Mammary epithelial cell (primary cell): ENCODE measurements at regions of chr14 and their contacts with region 1.

Region 1: DNA sequence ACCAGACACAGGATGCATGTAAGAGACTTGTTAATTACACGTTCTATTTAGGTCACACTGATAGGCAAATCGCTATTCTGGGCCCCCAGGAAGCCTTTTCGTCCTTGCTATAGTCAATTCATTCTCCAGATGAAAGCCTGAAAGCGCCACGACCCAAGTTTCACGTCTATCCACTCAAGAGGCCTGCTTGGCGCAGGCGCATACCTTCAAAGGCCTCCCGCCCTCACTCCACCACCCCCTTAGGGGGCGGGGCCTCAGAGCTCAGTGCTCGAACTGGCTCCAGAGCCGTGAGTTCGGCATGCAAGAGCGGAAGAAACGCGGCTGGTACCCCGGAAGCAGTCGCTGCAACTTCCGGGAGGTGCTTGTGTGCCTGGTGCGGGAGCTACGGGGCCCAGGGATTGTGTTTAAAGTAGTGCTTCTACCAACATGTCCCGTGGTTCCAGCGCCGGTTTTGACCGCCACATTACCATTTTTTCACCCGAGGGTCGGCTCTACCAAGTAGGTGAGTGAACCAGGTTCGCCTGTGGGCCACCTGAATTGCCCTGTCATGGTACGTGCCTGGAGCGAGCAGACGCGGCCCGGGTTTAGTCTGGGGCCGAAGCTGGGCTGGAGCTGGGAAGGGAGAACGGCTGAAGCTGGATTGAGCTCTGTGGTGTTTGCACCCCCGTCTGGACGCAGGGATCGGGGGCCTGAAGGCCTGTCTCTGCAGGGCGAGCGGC is at the start of gene PSMA6:
- DNase-seq: peak; percentile 99
- H3K4me3 ChIP-seq: peak within 1 kb of the TSS; percentile 70 to 91 (median 86)
- H3K27ac ChIP-seq: peak within 1 kb of the TSS; percentile 84
- H3K4me1 ChIP-seq: peaks cover 14% of the 10 kb centered on the region
- H3K27me3 ChIP-seq: no peaks in the 10 kb centered on the region
- CTCF ChIP-seq: no peak
- total RNA-seq, gene PSMA6: 128 to 181 TPM

Region 2: GRCh38 chr14:34857689-34858449 is 434.3 kb before region 1 on chr14:
- CTCF ChIA-PET with region 1: no interaction called
- dilution Hi-C with region 1: no loop called
- in situ Hi-C with region 1: no loop called
- intact Hi-C with region 1: no loop called
- DNase-seq: no peak
- H3K4me3 ChIP-seq: no peak overlapping the region
- H3K27ac ChIP-seq: no peak overlapping the region
- H3K4me1 ChIP-seq: no peaks in the 10 kb centered on the region
- H3K27me3 ChIP-seq: no peaks in the 10 kb centered on the region
- CTCF ChIP-seq: no peak

Region 3: GRCh38 chr14:35046048-35046741 is 246.0 kb before region 1 on chr14 and contains the start of gene FAM177A1:
- CTCF ChIA-PET with region 1: no interaction called
- dilution Hi-C with region 1: no loop called
- in situ Hi-C with region 1: no loop called
- intact Hi-C with region 1: loop called (anchors 5 kb)
- DNase-seq: peak; percentile 98
- H3K4me3 ChIP-seq: peak within 1 kb of the TSS; percentile 88 to 98 (median 91)
- H3K27ac ChIP-seq: peak within 1 kb of the TSS; percentile 97
- H3K4me1 ChIP-seq: peaks cover 11% of the 10 kb centered on the region
- H3K27me3 ChIP-seq: no peaks in the 10 kb centered on the region
- CTCF ChIP-seq: no peak
- total RNA-seq, gene FAM177A1: 30.2 to 84.2 TPM